ENCODE measurements at regions of chr9 and their contacts with region 1.

Region 1: GRCh38 chr9:113143541-113144244 is 7.1 kb upstream of the SLC31A2 start:
- DNase-seq: no peak
- H3K4me3 ChIP-seq: no peak overlapping the region
- H3K4me3 Mint-ChIP-seq: no peak overlapping the region
- H3K27ac Mint-ChIP-seq: no peak overlapping the region
- H3K4me1 ChIP-seq: no peaks in the 10 kb centered on the region
- H3K4me1 Mint-ChIP-seq: no peaks in the 10 kb centered on the region
- H3K27me3 ChIP-seq: no peaks in the 10 kb centered on the region
- H3K27me3 Mint-ChIP-seq: peaks cover 6% of the 10 kb centered on the region
- CTCF ChIP-seq: no peak

Region 2: DNA sequence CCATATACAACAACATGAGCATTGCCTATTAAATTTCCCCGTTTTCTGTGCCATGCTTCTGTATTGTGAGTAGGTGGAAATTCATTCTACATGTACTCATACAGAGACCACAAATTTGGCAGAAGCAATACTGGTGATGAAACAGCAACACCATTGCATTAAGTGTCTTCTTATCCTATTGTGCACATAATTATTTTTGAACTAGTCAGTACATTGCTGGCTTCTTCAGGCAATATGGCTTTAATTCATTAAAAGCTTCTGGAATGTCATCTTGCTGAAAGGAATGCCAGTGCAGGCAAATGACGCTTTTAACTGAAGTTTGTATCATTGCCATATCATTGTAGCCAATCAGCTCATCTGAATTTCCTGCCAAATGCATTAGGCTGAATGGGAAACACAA is 574.5 kb before region 1 on chr9:
- CTCF ChIA-PET with region 1: no interaction called
- POLR2A ChIA-PET with region 1: no interaction called
- intact Hi-C with region 1: no loop called
- DNase-seq: no peak
- H3K4me3 ChIP-seq: no peak overlapping the region
- H3K4me3 Mint-ChIP-seq: no peak overlapping the region
- H3K27ac Mint-ChIP-seq: no peak overlapping the region
- H3K4me1 ChIP-seq: no peaks in the 10 kb centered on the region
- H3K4me1 Mint-ChIP-seq: peaks cover 15% of the 10 kb centered on the region
- H3K27me3 ChIP-seq: no peaks in the 10 kb centered on the region
- H3K27me3 Mint-ChIP-seq: no peaks in the 10 kb centered on the region
- CTCF ChIP-seq: no peak

Region 3: GRCh38 chr9:113125386-113126035 is 18.2 kb before region 1 on chr9:
- CTCF ChIA-PET with region 1: no interaction called
- POLR2A ChIA-PET with region 1: no interaction called
- intact Hi-C with region 1: loop called (anchors 1 kb)
- DNase-seq: no peak
- H3K4me3 ChIP-seq: no peak overlapping the region
- H3K4me3 Mint-ChIP-seq: no peak overlapping the region
- H3K27ac Mint-ChIP-seq: no peak overlapping the region
- H3K4me1 ChIP-seq: no peaks in the 10 kb centered on the region
- H3K4me1 Mint-ChIP-seq: no peaks in the 10 kb centered on the region
- H3K27me3 ChIP-seq: no peaks in the 10 kb centered on the region
- H3K27me3 Mint-ChIP-seq: peaks cover 14% of the 10 kb centered on the region
- CTCF ChIP-seq: no peak

Measured in Caco-2 (cell line).